ENCODE measurements at regions of chr2 and their contacts with region 1.

Region 1: DNA sequence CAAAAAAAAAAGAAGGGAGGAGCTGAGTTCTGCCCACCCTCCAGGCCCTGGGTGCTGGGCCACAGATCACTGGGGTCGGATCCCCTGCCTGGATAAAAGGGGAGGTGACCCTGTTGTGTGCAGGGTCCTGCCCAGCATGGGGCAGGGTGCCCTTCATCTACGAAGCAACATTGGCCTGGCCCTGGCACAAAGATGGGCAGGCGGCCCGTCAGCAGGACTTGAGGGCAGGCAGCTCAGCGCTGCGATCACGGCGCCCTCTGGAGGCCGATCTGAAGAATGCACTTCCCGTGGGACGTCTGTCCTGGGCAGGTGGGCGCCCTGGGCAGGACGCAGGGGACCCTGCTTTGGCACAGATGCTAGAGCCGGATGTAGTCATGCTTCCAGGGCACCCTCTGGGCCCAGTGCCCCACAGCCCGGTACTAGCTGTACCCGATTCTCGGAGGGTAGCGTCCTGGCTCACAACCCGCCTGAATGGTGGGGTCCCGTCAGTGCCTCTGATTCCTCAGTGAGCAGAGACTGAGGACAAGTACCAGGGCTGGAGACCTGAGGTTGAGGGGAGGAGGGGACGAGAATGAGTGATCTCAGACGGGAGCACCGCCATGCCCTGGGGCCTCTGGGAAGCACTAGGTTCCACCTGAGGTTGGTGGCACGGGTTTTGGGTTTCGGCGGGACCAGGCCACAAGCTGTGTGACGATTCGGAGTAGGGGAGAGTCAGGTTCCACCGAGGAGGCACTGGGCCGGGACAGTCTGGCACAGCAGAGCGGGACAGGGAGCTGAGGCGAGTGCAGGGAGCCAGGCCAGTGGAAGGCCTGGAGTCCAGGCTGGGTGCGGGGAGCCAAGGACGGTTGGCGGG is 18.0 kb downstream of the ARID5A start:
- DNase-seq: no peak
- ATAC-seq: peak; percentile 79
- H3K4me3 ChIP-seq: no peak overlapping the region
- H3K27ac ChIP-seq: no peak overlapping the region
- H3K4me1 ChIP-seq: no peaks in the 10 kb centered on the region
- H3K27me3 ChIP-seq: no peaks in the 10 kb centered on the region
- CTCF ChIP-seq: peak; percentile 88 to 95 (median 91); a peak in 5 of 6 replicates
- EP300 ChIP-seq: no peak
- POLR2A ChIP-seq: peak; percentile 64
- RAD21 ChIP-seq: peak; percentile 77

Region 2: GRCh38 chr2:96514521-96514920 is 40.0 kb before region 1 on chr2:
- CTCF ChIA-PET with region 1: interaction called, 63 read pairs
- POLR2A ChIA-PET with region 1: interaction called, 5 read pairs
- RAD21 ChIA-PET with region 1: interaction called, 56 read pairs
- SMC1A ChIA-PET with region 1: interaction called, 21 read pairs
- in situ Hi-C with region 1: no loop called
- intact Hi-C with region 1: loop called (anchors 1 kb)
- DNase-seq: no peak
- ATAC-seq: no peak
- H3K4me3 ChIP-seq: no peak overlapping the region
- H3K27ac ChIP-seq: no peak overlapping the region
- H3K4me1 ChIP-seq: peaks cover 4% of the 10 kb centered on the region
- H3K27me3 ChIP-seq: no peaks in the 10 kb centered on the region
- CTCF ChIP-seq: no peak
- EP300 ChIP-seq: no peak
- POLR2A ChIP-seq: no peak
- RAD21 ChIP-seq: no peak